Heart right ventricle (tissue), 16 donors: ENCODE measurements at regions of chr16 and their contacts with region 1.

Region 1: GRCh38 chr16:81444448-81445121 is at the start of gene CMIP:
- DNase-seq: peak; percentile 87 to 88
- ATAC-seq: peak; percentile 67 to 91 (median 84)
- H3K4me3 ChIP-seq: peak within 1 kb of the TSS; percentile 67 to 91 (median 78)
- H3K27ac ChIP-seq: peak within 1 kb of the TSS; percentile 34 to 98 (median 84)
- H3K4me1 ChIP-seq: peaks cover 5 to 47% (median 33%) of the 10 kb centered on the region in 9 donors
- H3K27me3 ChIP-seq: peaks cover 0 to 6% (median 0%) of the 10 kb centered on the region in 7 donors
- CTCF ChIP-seq: no peak
- total RNA-seq, gene CMIP: 8.8 to 32.8 (median 14.0) TPM

Region 2: GRCh38 chr16:81481207-81481821 is 36.7 kb after region 1 on chr16:
- intact Hi-C with region 1: loop called in 1 of 10 experiments (anchors 5 kb)
- DNase-seq: peak; percentile 51 to 55
- ATAC-seq: peak; percentile 43 to 73 (median 57)
- H3K4me3 ChIP-seq: no peak overlapping the region
- H3K27ac ChIP-seq: peak overlapping the region in 5 of 10 donors; percentile 44 to 87 (median 57)
- H3K4me1 ChIP-seq: peaks cover 2 to 95% (median 66%) of the 10 kb centered on the region in 9 donors
- H3K27me3 ChIP-seq: no peaks in the 10 kb centered on the region
- CTCF ChIP-seq: no peak

Region 3: GRCh38 chr16:81493755-81494433 is 49.3 kb after region 1 on chr16:
- intact Hi-C with region 1: loop called in 3 of 10 experiments (anchors 5 to 10 kb)
- DNase-seq: no peak
- ATAC-seq: peak; percentile 21 to 81 (median 60)
- H3K4me3 ChIP-seq: no peak overlapping the region
- H3K27ac ChIP-seq: peak overlapping the region; percentile 15 to 84 (median 72)
- H3K4me1 ChIP-seq: peaks cover 11 to 97% (median 90%) of the 10 kb centered on the region in 9 donors
- H3K27me3 ChIP-seq: no peaks in the 10 kb centered on the region
- CTCF ChIP-seq: no peak

Region 4: DNA sequence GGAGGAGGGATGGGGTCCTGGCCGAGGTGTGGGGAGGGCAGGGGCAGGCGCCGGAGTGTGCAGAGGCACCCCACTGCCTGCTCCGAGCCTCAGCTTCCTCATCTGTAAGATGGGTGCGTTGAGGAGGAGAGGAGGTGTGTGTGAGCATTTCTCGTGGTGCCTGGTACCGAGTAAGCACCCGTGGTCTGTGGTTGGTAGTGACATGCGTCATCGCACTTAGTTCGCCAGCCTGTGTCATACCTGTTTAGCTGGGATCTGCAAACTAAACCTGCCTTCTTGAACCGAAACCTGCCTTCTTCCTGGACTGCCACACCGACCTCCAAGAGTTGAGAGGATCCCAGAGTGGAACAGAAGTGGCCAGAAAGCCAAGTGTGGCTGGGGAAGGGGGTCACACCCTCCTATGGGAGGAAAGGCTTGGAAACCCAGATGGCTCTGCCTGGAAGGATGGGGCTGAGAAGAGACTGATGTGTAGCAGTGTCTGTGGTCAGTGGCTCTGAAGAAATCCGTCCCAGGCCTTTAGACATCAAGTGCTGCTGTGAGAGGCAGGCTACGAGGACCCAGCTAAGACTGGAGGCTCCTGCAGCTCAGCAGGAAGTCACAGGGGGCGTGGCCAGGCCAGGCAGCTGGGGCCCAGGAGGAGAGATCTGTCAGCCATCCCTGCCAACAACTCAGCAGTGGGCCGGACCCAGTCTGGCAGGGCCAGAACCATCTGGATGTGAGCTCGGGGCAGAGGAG is 171.9 kb after region 1 on chr16:
- intact Hi-C with region 1: loop called in 2 of 10 experiments (anchors 10 kb)
- DNase-seq: peak; percentile 70 to 74
- ATAC-seq: peak in 6 of 8 donors; percentile 34 to 73 (median 59)
- H3K4me3 ChIP-seq: no peak overlapping the region
- H3K27ac ChIP-seq: peak overlapping the region in 2 of 10 donors; percentile 6 to 81
- H3K4me1 ChIP-seq: peaks cover 8 to 55% (median 49%) of the 10 kb centered on the region in 9 donors
- H3K27me3 ChIP-seq: no peaks in the 10 kb centered on the region
- CTCF ChIP-seq: no peak